Activated CD4-positive, alpha-beta T cell treated with anti-CD3 and anti-CD28 coated beads for 36 hours (primary cell): ENCODE measurements at regions of chr7 and their contacts with region 1.

Region 1: GRCh38 chr7:151876899-151877777 is at the start of gene PRKAG2:
- DNase-seq: peak; percentile 81
- ATAC-seq: peak; percentile 50
- H3K4me3 Mint-ChIP-seq: peak within 1 kb of the TSS; percentile 87
- H3K27ac Mint-ChIP-seq: peak within 1 kb of the TSS; percentile 82
- H3K4me1 Mint-ChIP-seq: peaks cover 14% of the 10 kb centered on the region
- H3K27me3 Mint-ChIP-seq: no peaks in the 10 kb centered on the region
- total RNA-seq, gene PRKAG2: 19.6 to 21.5 TPM

Region 2: DNA sequence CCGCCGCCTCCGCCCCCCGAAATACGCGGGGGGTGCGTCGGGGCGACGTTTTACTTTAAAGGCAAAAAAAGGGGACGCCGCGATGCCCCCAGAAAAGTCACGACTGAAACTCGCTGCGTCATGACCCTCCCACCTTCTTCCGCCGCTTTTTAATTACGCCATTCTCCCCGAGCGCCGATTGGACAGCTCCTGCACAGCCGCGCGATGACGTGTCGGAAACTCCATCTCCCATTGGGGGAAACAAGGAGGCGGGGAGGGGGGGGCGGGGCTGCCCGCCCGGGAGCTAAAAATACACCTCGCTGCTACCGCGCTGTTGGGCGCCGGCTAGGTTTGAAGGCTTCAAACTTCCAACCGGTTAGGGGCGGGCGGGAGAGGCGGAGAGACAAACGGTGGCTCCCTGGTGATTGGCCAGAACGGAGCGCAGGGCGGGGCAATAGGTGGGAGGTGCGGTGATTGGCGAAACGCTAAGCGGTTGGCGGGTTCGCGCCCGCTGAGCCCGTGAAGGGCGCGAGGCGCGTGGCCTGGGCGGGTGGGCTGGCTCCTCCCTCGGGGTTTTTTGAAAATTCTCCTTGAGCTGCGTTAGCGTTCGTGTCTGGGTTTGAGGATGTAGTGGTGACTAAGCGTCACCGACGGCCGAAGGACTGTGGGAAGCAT is 357.2 kb before region 1 on chr7 and contains the start of gene RHEB:
- CTCF ChIA-PET with region 1: no interaction called
- POLR2A ChIA-PET with region 1: no interaction called
- intact Hi-C with region 1: loop called in 1 of 2 experiments (anchors 2 kb)
- DNase-seq: peak; percentile 99
- ATAC-seq: peak; percentile 90
- H3K4me3 Mint-ChIP-seq: peak within 1 kb of the TSS; percentile 84
- H3K27ac Mint-ChIP-seq: peak within 1 kb of the TSS; percentile 97
- H3K4me1 Mint-ChIP-seq: peaks cover 35% of the 10 kb centered on the region
- H3K27me3 Mint-ChIP-seq: no peaks in the 10 kb centered on the region
- total RNA-seq, gene RHEB: 42.8 to 43.0 TPM

Region 3: GRCh38 chr7:151782598-151783448 is 94.3 kb before region 1 on chr7:
- CTCF ChIA-PET with region 1: interaction called, 8 read pairs
- POLR2A ChIA-PET with region 1: interaction called, 3 read pairs
- intact Hi-C with region 1: loop called (anchors 1 to 10 kb)
- DNase-seq: peak; percentile 84
- ATAC-seq: peak; percentile 91
- H3K4me3 Mint-ChIP-seq: peak overlapping the region; percentile 71
- H3K27ac Mint-ChIP-seq: peak overlapping the region; percentile 86
- H3K4me1 Mint-ChIP-seq: peaks cover 8% of the 10 kb centered on the region
- H3K27me3 Mint-ChIP-seq: no peaks in the 10 kb centered on the region

Region 4: GRCh38 chr7:151851145-151851751 is 25.9 kb before region 1 on chr7:
- CTCF ChIA-PET with region 1: interaction called, 3 read pairs
- POLR2A ChIA-PET with region 1: no interaction called
- intact Hi-C with region 1: loop called in 1 of 2 experiments (anchors 1 kb)
- DNase-seq: peak; percentile 66
- ATAC-seq: peak; percentile 86
- H3K4me3 Mint-ChIP-seq: peak overlapping the region; percentile 56
- H3K27ac Mint-ChIP-seq: peak overlapping the region; percentile 93
- H3K4me1 Mint-ChIP-seq: peaks cover 26% of the 10 kb centered on the region
- H3K27me3 Mint-ChIP-seq: no peaks in the 10 kb centered on the region

Region 5: GRCh38 chr7:151897161-151897731 is 20.1 kb after region 1 on chr7:
- CTCF ChIA-PET with region 1: no interaction called
- POLR2A ChIA-PET with region 1: no interaction called
- intact Hi-C with region 1: no loop called
- DNase-seq: no peak
- ATAC-seq: no peak
- H3K4me3 Mint-ChIP-seq: no peak overlapping the region
- H3K27ac Mint-ChIP-seq: no peak overlapping the region
- H3K4me1 Mint-ChIP-seq: no peaks in the 10 kb centered on the region
- H3K27me3 Mint-ChIP-seq: peaks cover 15% of the 10 kb centered on the region

Region 6: DNA sequence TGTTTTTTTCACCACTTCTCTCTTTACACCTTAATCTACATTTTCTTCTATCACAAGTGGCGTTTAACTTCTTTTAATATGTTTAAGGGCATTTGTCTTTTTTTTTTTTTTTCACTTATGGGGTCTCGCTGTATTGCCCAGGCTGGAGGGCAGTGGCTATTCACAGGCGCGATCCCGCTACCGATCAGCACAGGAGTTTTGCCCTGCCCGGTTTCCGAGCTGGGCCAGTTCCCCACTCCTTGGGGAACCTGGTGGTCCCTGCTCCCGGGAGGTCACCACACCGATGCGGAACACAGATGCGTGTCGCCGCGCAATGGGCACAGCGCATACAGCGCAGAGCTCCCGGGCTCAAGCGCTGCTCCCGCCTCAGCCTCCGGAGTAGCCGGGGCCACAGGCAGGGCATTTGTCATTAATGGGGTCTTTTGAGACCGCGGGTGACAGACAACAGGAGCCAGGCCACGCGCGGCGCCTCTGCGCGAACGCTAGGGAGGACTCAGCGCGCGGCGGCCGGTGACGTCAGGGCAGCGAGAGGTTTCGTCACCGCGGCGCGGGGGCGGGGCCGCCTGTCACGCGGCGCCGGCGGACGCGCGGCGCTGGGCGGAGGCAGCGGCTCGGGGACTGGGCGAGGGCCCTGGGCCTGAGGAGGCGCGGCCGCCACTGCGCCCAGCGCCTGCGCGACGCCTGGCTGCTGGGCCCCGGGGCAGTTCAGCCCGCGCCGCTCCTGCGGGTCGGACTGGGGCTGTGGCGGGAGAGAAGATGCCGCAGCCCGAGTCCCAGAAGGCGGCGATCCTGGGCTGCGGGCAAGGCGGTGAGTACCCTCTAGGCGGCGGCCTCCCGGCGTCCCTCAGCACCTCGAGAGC is 148.2 kb after region 1 on chr7 and contains the start of gene GALNT11:
- CTCF ChIA-PET with region 1: no interaction called
- POLR2A ChIA-PET with region 1: no interaction called
- intact Hi-C with region 1: loop called (anchors 1 to 5 kb)
- DNase-seq: peak; percentile 93
- ATAC-seq: peak; percentile 96
- H3K4me3 Mint-ChIP-seq: peak within 1 kb of the TSS; percentile 73
- H3K27ac Mint-ChIP-seq: peak within 1 kb of the TSS; percentile 85
- H3K4me1 Mint-ChIP-seq: peaks cover 35% of the 10 kb centered on the region
- H3K27me3 Mint-ChIP-seq: no peaks in the 10 kb centered on the region
- total RNA-seq, gene GALNT11: 22.0 to 24.8 TPM

Region 7: DNA sequence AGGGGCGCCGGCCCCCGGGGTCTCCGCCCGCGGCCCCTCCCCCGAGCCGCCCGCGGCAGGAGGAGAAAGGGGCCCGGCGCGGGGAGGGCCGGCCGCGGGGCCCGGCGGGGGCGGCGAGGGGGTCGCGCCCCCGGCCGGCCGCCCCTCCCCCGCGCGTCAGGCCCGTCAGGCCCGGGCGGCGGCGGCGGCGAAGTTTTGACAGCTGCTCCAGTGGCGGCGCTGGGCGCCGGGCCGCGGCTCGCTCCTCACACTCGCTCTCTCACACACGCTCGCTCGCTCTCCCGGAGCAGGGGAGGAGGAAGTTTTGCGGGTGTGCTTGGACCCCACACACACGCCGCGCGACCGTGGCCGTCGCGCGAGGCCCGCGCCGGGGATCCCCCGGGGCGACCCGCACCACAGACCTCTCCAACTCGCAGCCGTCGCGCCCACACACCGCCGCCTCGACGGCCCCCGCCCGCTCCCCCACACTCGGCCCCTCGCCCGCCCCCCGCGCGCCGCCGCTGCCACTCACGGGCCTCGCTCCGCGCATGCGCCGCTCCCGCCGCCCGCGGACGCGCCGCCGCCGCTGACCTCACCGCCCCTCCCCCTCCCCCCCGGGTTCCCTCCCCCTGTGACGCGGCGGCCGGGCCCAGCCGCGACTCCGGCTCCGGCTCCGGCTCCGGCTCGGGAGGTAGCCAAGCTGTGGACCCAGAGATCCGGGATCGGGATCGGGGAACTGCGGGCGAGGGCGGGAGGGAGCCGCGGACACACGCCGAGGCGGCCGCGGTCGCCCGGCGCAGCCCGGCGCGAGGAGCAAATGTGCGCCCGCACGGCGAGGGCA is 559.2 kb after region 1 on chr7:
- CTCF ChIA-PET with region 1: no interaction called
- POLR2A ChIA-PET with region 1: no interaction called
- intact Hi-C with region 1: loop called in 1 of 2 experiments (anchors 2 kb)
- DNase-seq: peak; percentile 93
- ATAC-seq: peak; percentile 55
- H3K4me3 Mint-ChIP-seq: peak overlapping the region; percentile 74
- H3K27ac Mint-ChIP-seq: peak overlapping the region; percentile 82
- H3K4me1 Mint-ChIP-seq: peaks cover 22% of the 10 kb centered on the region
- H3K27me3 Mint-ChIP-seq: no peaks in the 10 kb centered on the region